ENCODE measurements at regions of chr1 and their contacts with region 1.

Region 1: GRCh38 chr1:196355206-196355786 is 252.9 kb downstream of the KCNT2 start:
- DNase-seq: peak; percentile 64
- H3K4me3 ChIP-seq: no peak overlapping the region
- H3K27ac ChIP-seq: no peak overlapping the region
- H3K4me1 ChIP-seq: no peaks in the 10 kb centered on the region
- H3K27me3 ChIP-seq: no peaks in the 10 kb centered on the region
- CTCF ChIP-seq: peak; percentile 28 to 38
- POLR2A ChIP-seq: no peak

Region 2: GRCh38 chr1:196344453-196344852 is 10.8 kb before region 1 on chr1:
- CTCF ChIA-PET with region 1: interaction called, 11 read pairs
- POLR2A ChIA-PET with region 1: no interaction called
- dilution Hi-C with region 1: no loop called
- intact Hi-C with region 1: no loop called
- DNase-seq: no peak
- H3K4me3 ChIP-seq: no peak overlapping the region
- H3K27ac ChIP-seq: no peak overlapping the region
- H3K4me1 ChIP-seq: no peaks in the 10 kb centered on the region
- H3K27me3 ChIP-seq: no peaks in the 10 kb centered on the region
- CTCF ChIP-seq: no peak
- POLR2A ChIP-seq: no peak

Region 3: DNA sequence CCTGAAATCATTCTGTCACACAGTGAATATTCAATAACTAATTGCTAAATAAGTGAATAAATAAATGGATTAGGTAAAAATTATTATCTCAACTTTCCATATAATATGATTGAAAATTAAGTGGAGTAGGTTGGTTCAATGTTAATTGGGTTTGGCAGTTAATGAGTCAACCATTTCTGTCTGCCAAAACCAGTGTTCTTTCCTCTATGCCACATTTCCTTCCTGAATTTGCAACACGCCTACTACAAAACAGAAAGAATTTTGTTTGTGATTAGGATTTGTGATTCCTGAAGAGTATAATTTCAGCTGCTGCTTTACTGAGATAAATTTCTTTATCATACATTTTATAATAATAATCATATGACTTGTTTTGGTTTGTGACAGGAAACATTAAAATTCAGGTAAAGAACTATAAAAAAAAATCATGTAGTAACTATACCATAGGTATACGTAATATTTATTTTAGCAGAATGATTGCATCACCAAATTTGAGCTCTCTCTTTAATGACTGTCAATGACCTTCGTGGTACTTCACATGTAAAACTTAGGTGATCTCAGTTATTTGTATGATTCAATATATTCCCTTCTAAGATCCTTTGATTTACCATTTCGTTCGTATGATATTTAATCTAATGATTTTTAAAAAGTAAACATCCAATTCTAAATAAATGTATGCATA is 11.7 kb after region 1 on chr1:
- CTCF ChIA-PET with region 1: interaction called, 31 read pairs
- POLR2A ChIA-PET with region 1: no interaction called
- dilution Hi-C with region 1: no loop called
- intact Hi-C with region 1: no loop called
- DNase-seq: peak; percentile 65
- H3K4me3 ChIP-seq: no peak overlapping the region
- H3K27ac ChIP-seq: peak overlapping the region; percentile 7
- H3K4me1 ChIP-seq: peaks cover 11% of the 10 kb centered on the region
- H3K27me3 ChIP-seq: no peaks in the 10 kb centered on the region
- CTCF ChIP-seq: no peak
- POLR2A ChIP-seq: no peak

Region 4: DNA sequence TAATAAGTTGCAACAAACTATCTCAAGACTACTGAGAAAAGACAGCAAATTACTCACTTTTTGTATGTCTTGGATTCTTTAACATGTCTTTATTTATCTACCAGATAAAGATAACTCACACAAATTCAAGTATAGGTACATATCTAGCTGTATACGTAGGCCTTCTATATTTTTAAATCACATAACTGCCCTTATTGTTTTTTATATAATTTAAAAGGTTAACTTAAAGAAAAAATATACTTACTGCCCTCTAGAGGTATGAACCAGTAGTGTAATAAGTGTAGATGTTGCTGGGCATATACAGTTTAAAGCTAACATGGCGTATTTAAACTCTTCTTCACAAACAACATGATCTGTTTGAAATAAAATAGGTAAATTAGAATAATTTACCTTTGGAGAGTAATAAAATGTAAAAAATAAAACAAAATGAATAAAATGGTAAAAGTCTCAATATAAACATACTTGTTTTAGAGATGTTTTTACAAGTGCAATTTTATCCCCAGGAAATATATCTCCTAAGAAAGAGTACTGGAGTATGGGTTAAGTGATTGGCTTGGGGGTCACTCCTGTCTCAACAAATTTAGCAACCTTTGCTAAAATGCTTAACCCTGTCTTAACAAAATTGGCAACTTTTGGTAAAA is 17.7 kb after region 1 on chr1:
- CTCF ChIA-PET with region 1: interaction called, 31 read pairs
- POLR2A ChIA-PET with region 1: no interaction called
- dilution Hi-C with region 1: no loop called
- intact Hi-C with region 1: no loop called
- DNase-seq: peak; percentile 54
- H3K4me3 ChIP-seq: no peak overlapping the region
- H3K27ac ChIP-seq: no peak overlapping the region
- H3K4me1 ChIP-seq: no peaks in the 10 kb centered on the region
- H3K27me3 ChIP-seq: no peaks in the 10 kb centered on the region
- CTCF ChIP-seq: peak; percentile 18 to 22
- POLR2A ChIP-seq: no peak

Region 5: GRCh38 chr1:196415978-196416377 is 60.7 kb after region 1 on chr1:
- CTCF ChIA-PET with region 1: no interaction called
- POLR2A ChIA-PET with region 1: no interaction called
- dilution Hi-C with region 1: no loop called
- intact Hi-C with region 1: no loop called
- DNase-seq: no peak
- H3K4me3 ChIP-seq: no peak overlapping the region
- H3K27ac ChIP-seq: no peak overlapping the region
- H3K4me1 ChIP-seq: no peaks in the 10 kb centered on the region
- H3K27me3 ChIP-seq: no peaks in the 10 kb centered on the region
- CTCF ChIP-seq: no peak
- POLR2A ChIP-seq: no peak

Region 6: DNA sequence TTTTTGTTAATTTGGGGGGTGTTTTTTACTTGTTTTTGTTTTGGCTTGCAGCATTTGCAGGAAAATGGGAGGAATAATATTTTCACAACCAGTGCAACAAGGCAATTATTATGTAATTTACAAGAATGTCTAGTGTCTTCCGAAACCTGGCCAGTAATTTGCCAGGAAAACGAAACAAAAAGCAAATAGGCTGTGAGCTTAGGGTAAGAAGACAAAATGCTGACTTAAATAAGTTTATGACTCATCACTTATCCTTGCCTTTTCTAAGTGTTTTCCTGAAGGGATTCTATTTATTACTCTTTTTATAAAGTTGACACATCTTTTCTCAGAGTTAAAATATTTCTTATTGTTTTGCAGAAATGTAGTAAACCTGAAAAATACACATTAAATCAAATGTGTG is 203.1 kb after region 1 on chr1:
- CTCF ChIA-PET with region 1: no interaction called
- POLR2A ChIA-PET with region 1: no interaction called
- dilution Hi-C with region 1: no loop called
- intact Hi-C with region 1: loop called (anchors 5 kb)
- DNase-seq: peak; percentile 71
- H3K4me3 ChIP-seq: peak overlapping the region in 2 of 3 experiments; percentile 83
- H3K27ac ChIP-seq: peak overlapping the region; percentile 29
- H3K4me1 ChIP-seq: no peaks in the 10 kb centered on the region
- H3K27me3 ChIP-seq: no peaks in the 10 kb centered on the region
- CTCF ChIP-seq: no peak
- POLR2A ChIP-seq: no peak

Region 7: GRCh38 chr1:196608390-196609369 is 253.4 kb after region 1 on chr1 and contains the start of gene KCNT2:
- CTCF ChIA-PET with region 1: interaction called, 9 read pairs
- POLR2A ChIA-PET with region 1: no interaction called
- dilution Hi-C with region 1: no loop called
- intact Hi-C with region 1: loop called (anchors 5 kb)
- DNase-seq: peak; percentile 86
- H3K4me3 ChIP-seq: peak within 1 kb of the TSS; percentile 68 to 79 (median 69)
- H3K27ac ChIP-seq: no peak within 1 kb of the TSS
- H3K4me1 ChIP-seq: peaks cover 10% of the 10 kb centered on the region
- H3K27me3 ChIP-seq: no peaks in the 10 kb centered on the region
- CTCF ChIP-seq: peak in 1 of 2 donors; percentile 3
- POLR2A ChIP-seq: no peak
- total RNA-seq, gene KCNT2: 1.4 and 1.6 TPM in 2 replicates

Region 8: GRCh38 chr1:196660852-196661251 is 305.6 kb after region 1 on chr1:
- CTCF ChIA-PET with region 1: interaction called, 197 read pairs
- POLR2A ChIA-PET with region 1: no interaction called
- dilution Hi-C with region 1: no loop called
- intact Hi-C with region 1: loop called (anchors 1 kb)
- DNase-seq: peak; percentile 53
- H3K4me3 ChIP-seq: peak overlapping the region in 1 of 3 experiments; percentile 52
- H3K27ac ChIP-seq: no peak overlapping the region
- H3K4me1 ChIP-seq: no peaks in the 10 kb centered on the region
- H3K27me3 ChIP-seq: no peaks in the 10 kb centered on the region
- CTCF ChIP-seq: peak in 1 of 2 donors; percentile 4
- POLR2A ChIP-seq: no peak